GM23248 (cell line): ENCODE measurements at regions of chr9 and their contacts with region 1.

Region 1: DNA sequence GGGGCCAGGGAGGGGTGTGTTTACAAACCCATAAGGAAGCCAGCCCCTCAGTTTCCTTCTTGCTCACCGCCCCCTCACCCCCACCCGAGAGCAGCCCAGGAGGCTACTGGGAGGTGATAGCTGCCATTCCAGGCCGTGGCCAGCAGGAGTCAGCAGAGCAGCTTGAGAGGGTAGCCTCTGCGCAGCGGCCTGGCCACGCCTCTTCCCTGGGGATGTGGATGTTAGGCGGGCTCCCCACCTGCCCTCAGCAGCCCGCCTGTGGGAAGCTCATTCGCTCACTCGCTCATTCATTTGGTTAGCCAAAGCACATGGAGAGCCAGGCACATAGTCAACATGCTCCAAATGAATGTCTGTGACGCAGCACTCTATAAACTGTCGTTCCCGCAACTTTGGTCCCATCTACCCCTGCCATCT is 6.1 kb upstream of the DPM2 start:
- DNase-seq: peak; percentile 89
- H3K4me3 ChIP-seq: no peak overlapping the region
- H3K27ac ChIP-seq: no peak overlapping the region
- H3K4me1 ChIP-seq: no peaks in the 10 kb centered on the region
- H3K27me3 ChIP-seq: no peaks in the 10 kb centered on the region

Region 2: GRCh38 chr9:128001779-128002298 is 58.1 kb after region 1 on chr9:
- in situ Hi-C with region 1: no loop called
- DNase-seq: peak; percentile 97
- H3K4me3 ChIP-seq: no peak overlapping the region
- H3K27ac ChIP-seq: peak overlapping the region; percentile 80
- H3K4me1 ChIP-seq: peaks cover 6% of the 10 kb centered on the region
- H3K27me3 ChIP-seq: no peaks in the 10 kb centered on the region

Region 3: GRCh38 chr9:128034821-128035764 is 91.4 kb after region 1 on chr9:
- in situ Hi-C with region 1: loop called (anchors 10 kb)
- DNase-seq: peak; percentile 85
- H3K4me3 ChIP-seq: no peak overlapping the region
- H3K27ac ChIP-seq: no peak overlapping the region
- H3K4me1 ChIP-seq: no peaks in the 10 kb centered on the region
- H3K27me3 ChIP-seq: no peaks in the 10 kb centered on the region

Region 4: DNA sequence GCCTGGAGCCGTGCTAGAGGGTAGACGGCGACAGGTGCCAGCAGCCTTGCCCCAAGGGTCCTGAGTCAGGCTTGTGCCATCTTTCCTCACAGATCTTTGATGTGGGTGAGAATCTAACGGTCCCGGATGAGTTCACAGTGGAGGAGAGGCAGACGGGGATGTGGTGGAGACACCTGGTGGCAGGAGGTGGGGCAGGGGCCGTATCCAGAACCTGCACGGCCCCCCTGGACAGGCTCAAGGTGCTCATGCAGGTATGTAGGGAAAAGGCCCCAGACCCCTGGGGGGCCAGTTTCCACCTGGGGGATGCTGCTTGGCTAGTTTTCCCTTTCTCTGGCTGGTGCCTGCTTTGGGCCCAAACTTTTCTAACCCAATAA is 159.8 kb after region 1 on chr9:
- in situ Hi-C with region 1: loop called (anchors 10 kb)
- DNase-seq: no peak
- H3K4me3 ChIP-seq: no peak overlapping the region
- H3K27ac ChIP-seq: no peak overlapping the region
- H3K4me1 ChIP-seq: peaks cover 14% of the 10 kb centered on the region
- H3K27me3 ChIP-seq: no peaks in the 10 kb centered on the region

Region 5: GRCh38 chr9:128271108-128271507 is 327.4 kb after region 1 on chr9:
- in situ Hi-C with region 1: no loop called
- DNase-seq: no peak
- H3K4me3 ChIP-seq: no peak overlapping the region
- H3K27ac ChIP-seq: no peak overlapping the region
- H3K4me1 ChIP-seq: peaks cover 12% of the 10 kb centered on the region
- H3K27me3 ChIP-seq: no peaks in the 10 kb centered on the region

Region 6: DNA sequence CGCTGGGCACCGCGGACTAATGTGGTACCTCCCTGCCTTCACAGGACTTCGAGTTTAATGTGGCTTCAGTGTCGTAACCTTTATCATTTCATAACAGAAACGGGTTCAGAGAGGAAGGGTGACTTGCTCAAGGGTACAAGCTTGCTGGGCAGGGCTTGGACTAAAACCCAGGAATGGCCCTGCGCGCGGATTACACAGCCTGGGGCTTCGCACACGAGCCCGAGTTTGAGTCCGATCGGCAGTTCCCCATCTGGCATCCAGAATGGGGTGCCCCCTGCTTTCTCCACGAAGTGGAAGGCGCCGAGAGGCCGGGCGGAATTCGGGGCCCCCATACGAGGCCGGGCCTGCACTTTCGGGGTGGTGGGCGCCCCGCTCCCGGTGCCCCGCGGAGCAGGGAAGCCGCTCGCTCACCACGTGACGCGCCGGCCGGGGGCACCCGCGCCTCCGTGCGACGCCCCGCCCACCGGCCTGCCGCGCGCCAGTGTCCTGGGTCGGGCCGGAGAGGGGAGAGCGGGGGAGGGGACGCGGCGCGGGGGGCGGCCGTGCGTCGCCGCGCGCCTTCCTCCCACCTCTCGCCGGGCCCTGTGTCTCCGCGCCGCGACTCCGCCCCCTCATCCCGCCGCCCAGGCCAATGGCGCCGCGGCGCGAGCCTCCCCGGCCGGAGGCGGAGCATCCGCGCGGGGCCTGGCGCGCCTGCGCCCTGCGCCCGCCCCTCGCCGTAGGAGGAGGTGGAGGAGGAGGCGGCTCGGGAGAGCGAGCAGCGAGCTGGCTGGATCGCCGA is 745.0 kb after region 1 on chr9 and contains the start of gene SET:
- in situ Hi-C with region 1: no loop called
- DNase-seq: peak; percentile 97
- H3K4me3 ChIP-seq: peak within 1 kb of the TSS; percentile 94
- H3K27ac ChIP-seq: peak within 1 kb of the TSS; percentile 83
- H3K4me1 ChIP-seq: peaks cover 21% of the 10 kb centered on the region
- H3K27me3 ChIP-seq: no peaks in the 10 kb centered on the region
- total RNA-seq, gene SET: 263 and 283 TPM in 2 replicates